HepG2 (cell line): ENCODE measurements at regions of chr1 and their contacts with region 1.

Region 1: DNA sequence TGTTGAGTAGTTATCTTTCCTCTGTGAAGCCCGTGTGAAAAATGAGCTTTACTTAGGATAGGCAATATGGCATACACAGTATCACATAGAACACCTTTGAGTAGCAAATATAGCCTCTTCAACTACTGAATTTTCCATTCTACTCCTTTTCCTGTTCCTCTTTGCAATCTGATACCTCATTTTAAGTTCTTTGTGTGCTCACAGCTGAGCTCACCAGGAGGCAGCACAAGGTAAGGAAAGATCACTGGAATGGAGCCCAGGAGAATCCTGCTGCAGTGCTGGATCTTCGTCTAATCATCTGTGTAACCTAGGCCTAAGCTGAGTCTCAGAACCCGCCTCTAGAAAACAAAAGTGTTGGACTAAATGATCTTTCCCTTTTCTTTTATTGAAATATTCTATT is 171.0 kb downstream of the LRRC40 start:
- DNase-seq: peak; percentile 13
- ATAC-seq: peak; percentile 48
- H3K4me3 ChIP-seq: no peak overlapping the region
- H3K27ac ChIP-seq: no peak overlapping the region
- H3K4me1 ChIP-seq: no peaks in the 10 kb centered on the region
- H3K27me3 ChIP-seq: 0 out of 5 replicates have a peak, but pooled peaks cover 0 to 7% of the 10 kb centered on the region in 2 experiments
- CTCF ChIP-seq: peak; percentile 35; the same call in 1 of the 2 replicates
- EP300 ChIP-seq: no peak
- POLR2A ChIP-seq: no peak
- RAD21 ChIP-seq: no peak

Region 2: DNA sequence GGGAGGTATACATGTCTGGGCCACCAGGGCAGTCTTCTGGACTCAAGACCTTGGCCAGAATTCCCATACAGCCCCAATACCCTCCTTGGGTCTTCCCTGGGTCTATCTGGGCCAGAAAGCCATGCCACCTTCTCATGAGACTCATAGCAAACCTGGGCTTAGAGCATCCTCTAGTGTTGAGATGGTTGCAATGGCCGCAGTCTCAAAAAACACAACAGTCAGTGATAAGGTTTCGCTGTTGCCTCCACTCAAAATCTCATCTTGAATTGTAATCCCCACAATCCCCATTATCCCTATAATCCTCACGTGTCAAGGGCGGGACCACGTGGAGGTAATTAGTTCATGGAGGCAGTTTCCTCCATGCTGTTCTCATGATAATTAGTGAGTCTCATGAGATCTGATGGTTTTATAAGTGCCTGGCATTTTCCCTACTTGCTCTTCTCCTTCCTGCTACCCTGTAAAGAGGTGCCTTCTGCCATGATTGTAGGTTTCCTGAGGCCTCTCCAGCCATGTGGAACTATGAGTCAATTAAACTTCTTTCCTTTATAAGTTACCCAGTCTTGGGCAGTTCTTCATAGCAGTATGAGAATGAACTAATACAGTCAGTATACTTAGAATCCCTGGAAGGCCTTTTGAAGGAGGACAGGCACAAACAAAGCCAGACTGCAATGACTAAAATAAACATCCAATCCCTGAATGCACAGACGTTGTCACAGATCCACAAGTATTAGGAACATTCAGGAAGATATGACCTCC is 453.7 kb after region 1 on chr1:
- CTCF ChIA-PET with region 1: no interaction called
- POLR2A ChIA-PET with region 1: no interaction called
- in situ Hi-C with region 1: no loop called
- intact Hi-C with region 1: loop called (anchors 5 kb)
- DNase-seq: peak; percentile 43
- ATAC-seq: peak; percentile 95
- H3K4me3 ChIP-seq: no peak overlapping the region
- H3K27ac ChIP-seq: no peak overlapping the region
- H3K4me1 ChIP-seq: no peaks in the 10 kb centered on the region
- H3K27me3 ChIP-seq: no peaks in the 10 kb centered on the region
- CTCF ChIP-seq: peak; percentile 87
- EP300 ChIP-seq: no peak
- POLR2A ChIP-seq: no peak
- RAD21 ChIP-seq: peak; percentile 66